GM12878 (cell line): ENCODE measurements at regions of chr10 and their contacts with region 1.

Region 1: GRCh38 chr10:33743429-33743857 is 409.0 kb upstream of the NRP1 start:
- DNase-seq: peak; percentile 19
- ATAC-seq: peak; percentile 81
- H3K4me3 ChIP-seq: no peak overlapping the region
- H3K27ac ChIP-seq: no peak overlapping the region
- H3K4me1 ChIP-seq: no peaks in the 10 kb centered on the region
- H3K27me3 ChIP-seq: no peaks in the 10 kb centered on the region
- CTCF ChIP-seq: no peak
- EP300 ChIP-seq: no peak
- POLR2A ChIP-seq: no peak
- RAD21 ChIP-seq: no peak

Region 2: DNA sequence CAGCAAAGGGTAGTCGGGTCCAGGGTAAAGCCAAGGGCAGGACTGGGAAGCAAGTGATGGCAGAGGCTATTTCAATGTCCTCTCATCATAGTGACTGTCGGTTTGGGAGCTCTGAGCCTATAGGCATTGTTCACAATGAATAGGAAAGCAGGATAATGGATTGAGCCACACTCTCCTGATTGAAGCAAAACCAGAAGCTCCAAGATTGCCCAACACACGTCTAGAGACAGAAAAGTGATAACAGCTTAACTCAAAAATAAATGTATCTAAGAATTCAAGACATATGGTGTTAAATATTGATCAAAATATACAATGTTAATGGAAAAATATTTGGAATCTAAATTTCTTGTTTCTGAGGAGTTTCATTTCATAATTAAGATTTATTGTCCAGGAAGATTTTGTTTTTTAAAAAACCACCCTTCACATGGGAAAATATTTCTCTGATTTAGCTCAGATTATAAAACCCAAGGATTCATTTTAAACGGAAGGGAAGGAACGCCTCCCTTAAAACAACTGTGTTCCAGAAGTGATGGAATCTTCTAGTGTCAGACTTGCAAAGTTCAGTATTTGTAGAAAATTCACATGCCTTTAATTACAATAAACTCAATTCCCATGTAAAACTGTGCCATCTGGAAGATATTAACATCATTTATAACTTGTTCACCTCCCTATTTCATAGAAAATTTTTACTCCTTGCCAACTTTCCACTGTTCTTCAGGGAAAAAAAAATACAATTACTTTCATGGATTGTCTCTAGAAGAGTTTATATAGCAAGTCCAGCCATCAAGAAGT is 463.4 kb before region 1 on chr10:
- CTCF ChIA-PET with region 1: no interaction called
- POLR2A ChIA-PET with region 1: no interaction called
- RAD21 ChIA-PET with region 1: no interaction called
- SMC1A ChIA-PET with region 1: no interaction called
- in situ Hi-C with region 1: no loop called
- intact Hi-C with region 1: no loop called
- DNase-seq: no peak
- ATAC-seq: no peak
- H3K4me3 ChIP-seq: no peak overlapping the region
- H3K27ac ChIP-seq: no peak overlapping the region
- H3K4me1 ChIP-seq: no peaks in the 10 kb centered on the region
- H3K27me3 ChIP-seq: 0 out of 4 replicates have a peak, but pooled peaks cover 0 to 2% of the 10 kb centered on the region in 2 experiments
- CTCF ChIP-seq: no peak
- EP300 ChIP-seq: no peak
- POLR2A ChIP-seq: no peak
- RAD21 ChIP-seq: no peak

Region 3: GRCh38 chr10:33509231-33509831 is 234.1 kb before region 1 on chr10:
- CTCF ChIA-PET with region 1: interaction called, 5 read pairs
- POLR2A ChIA-PET with region 1: no interaction called
- RAD21 ChIA-PET with region 1: interaction called, 4 read pairs
- SMC1A ChIA-PET with region 1: interaction called, 11 read pairs
- in situ Hi-C with region 1: no loop called
- intact Hi-C with region 1: no loop called
- DNase-seq: peak; percentile 25
- ATAC-seq: peak; percentile 87
- H3K4me3 ChIP-seq: no peak overlapping the region
- H3K27ac ChIP-seq: no peak overlapping the region
- H3K4me1 ChIP-seq: no peaks in the 10 kb centered on the region
- H3K27me3 ChIP-seq: no peaks in the 10 kb centered on the region
- CTCF ChIP-seq: no peak
- EP300 ChIP-seq: peak; percentile 70 to 84; a peak in 3 of 4 replicates
- POLR2A ChIP-seq: no peak
- RAD21 ChIP-seq: no peak

Region 4: DNA sequence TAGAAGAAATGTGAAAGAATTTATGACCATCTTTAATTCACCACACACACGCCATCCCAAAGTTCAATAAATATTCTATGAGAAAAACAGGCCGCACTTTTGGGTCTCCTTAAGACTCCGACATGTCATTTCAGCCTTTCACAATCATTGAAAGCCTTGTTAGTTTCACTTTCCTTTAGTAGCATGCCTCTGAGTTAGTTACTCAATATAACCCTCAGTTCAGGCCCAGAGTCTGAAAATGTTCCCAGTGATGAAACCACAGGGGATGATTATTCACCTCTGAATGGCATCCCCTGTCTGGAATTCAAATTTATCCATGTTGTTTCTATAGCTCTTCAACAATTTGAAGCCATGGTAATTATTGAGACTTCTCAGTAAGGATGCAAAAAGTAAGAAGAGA is 130.9 kb before region 1 on chr10:
- CTCF ChIA-PET with region 1: no interaction called
- POLR2A ChIA-PET with region 1: no interaction called
- RAD21 ChIA-PET with region 1: no interaction called
- SMC1A ChIA-PET with region 1: interaction called, 11 read pairs
- in situ Hi-C with region 1: no loop called
- intact Hi-C with region 1: no loop called
- DNase-seq: no peak
- ATAC-seq: peak; percentile 96
- H3K4me3 ChIP-seq: no peak overlapping the region
- H3K27ac ChIP-seq: no peak overlapping the region
- H3K4me1 ChIP-seq: no peaks in the 10 kb centered on the region
- H3K27me3 ChIP-seq: no peaks in the 10 kb centered on the region
- CTCF ChIP-seq: no peak
- EP300 ChIP-seq: peak in 1 of 2 experiments; percentile 25; a peak in 1 of 4 replicates
- POLR2A ChIP-seq: no peak
- RAD21 ChIP-seq: no peak

Region 5: DNA sequence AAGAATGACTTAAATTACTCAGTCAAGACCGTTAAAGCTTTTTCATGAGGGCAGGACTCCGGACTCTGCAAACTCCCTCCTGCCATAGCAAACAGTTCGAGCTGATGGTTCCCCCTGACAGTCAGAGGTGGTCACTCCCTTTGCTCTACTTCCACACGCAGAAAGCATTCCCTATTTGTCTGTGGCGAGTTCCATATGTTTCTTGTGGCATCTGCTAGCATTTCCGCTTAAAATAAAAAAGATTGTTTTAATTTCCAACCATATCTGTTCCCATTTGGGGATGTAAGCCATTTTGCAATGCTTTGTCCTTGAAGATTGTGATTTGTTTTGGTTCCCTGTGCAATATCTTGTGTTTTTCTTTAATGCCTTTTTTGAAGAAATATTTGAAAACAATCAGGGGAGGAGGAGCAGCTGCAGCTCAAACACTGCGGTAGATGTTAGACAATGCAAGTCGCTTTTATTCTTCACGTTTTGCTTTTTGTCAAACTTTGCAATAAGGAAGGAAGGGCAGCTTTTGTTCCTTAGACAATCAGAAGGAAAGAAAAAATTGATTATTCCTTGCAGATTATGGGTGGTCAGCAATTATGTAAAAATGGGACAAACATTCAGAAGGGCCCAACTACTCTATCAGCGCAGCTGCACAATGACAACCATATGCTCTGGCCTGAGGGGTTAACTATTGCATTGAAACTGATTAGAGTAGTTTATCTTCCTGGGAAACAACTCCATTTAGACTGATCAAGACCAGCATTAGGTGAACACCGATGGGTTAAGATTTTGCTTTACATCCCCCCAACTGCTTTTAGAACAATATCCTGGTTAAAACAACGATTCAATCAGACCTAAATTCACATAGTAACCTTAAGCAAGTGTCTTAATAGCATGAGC is 16.9 kb after region 1 on chr10:
- CTCF ChIA-PET with region 1: interaction called, 6 read pairs
- POLR2A ChIA-PET with region 1: interaction called, 4 read pairs
- RAD21 ChIA-PET with region 1: interaction called, 10 read pairs
- SMC1A ChIA-PET with region 1: interaction called, 27 read pairs
- in situ Hi-C with region 1: no loop called
- intact Hi-C with region 1: no loop called
- DNase-seq: no peak
- ATAC-seq: no peak
- H3K4me3 ChIP-seq: no peak overlapping the region
- H3K27ac ChIP-seq: no peak overlapping the region
- H3K4me1 ChIP-seq: no peaks in the 10 kb centered on the region
- H3K27me3 ChIP-seq: no peaks in the 10 kb centered on the region
- CTCF ChIP-seq: no peak
- EP300 ChIP-seq: no peak
- POLR2A ChIP-seq: no peak
- RAD21 ChIP-seq: no peak

Region 6: DNA sequence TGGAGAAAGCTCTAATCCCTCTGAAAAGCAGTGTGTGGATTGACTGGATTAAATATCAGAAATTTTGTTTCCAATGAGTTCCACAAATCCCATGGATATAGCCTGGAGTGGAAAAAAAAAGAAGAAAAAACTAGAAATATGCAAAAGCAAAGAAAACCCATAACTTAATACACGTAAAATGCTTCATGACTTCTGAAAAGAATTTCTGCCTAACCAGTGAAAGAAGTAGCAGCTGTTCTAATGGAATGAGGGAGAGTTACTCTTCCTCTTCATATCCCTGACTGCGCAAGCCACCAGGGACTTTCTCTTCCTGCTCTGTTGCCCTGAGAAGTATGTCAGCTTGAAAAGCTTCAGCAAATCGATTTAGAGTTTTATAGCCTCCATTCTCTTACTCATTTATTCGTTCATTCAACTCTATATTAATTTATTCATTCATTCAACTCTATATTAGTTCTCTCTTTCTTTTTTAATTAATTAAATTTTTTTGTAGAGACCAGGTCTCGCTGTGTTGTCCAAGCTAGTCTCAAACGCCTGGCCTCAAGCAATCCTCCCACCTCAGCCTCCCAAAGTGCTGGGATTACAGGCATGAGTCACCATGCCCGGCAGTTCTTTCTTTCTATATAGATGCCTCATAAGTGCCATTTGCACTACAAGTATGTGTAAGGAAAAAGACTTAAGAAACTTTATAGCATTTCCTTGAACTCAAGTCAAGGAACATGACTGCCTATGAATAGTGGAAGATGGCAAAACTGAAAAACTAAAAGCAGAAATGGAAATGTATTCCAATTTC is 38.4 kb after region 1 on chr10:
- CTCF ChIA-PET with region 1: interaction called, 3 read pairs
- POLR2A ChIA-PET with region 1: interaction called, 4 read pairs
- RAD21 ChIA-PET with region 1: interaction called, 69 read pairs
- SMC1A ChIA-PET with region 1: interaction called, 84 read pairs
- in situ Hi-C with region 1: no loop called
- intact Hi-C with region 1: no loop called
- DNase-seq: no peak
- ATAC-seq: no peak
- H3K4me3 ChIP-seq: no peak overlapping the region
- H3K27ac ChIP-seq: no peak overlapping the region
- H3K4me1 ChIP-seq: no peaks in the 10 kb centered on the region
- H3K27me3 ChIP-seq: no peaks in the 10 kb centered on the region
- CTCF ChIP-seq: no peak
- EP300 ChIP-seq: no peak
- POLR2A ChIP-seq: no peak
- RAD21 ChIP-seq: no peak

Region 7: GRCh38 chr10:33986515-33986914 is 243.1 kb after region 1 on chr10:
- CTCF ChIA-PET with region 1: no interaction called
- POLR2A ChIA-PET with region 1: no interaction called
- RAD21 ChIA-PET with region 1: no interaction called
- SMC1A ChIA-PET with region 1: no interaction called
- in situ Hi-C with region 1: no loop called
- intact Hi-C with region 1: no loop called
- DNase-seq: no peak
- ATAC-seq: no peak
- H3K4me3 ChIP-seq: no peak overlapping the region
- H3K27ac ChIP-seq: no peak overlapping the region
- H3K4me1 ChIP-seq: no peaks in the 10 kb centered on the region
- H3K27me3 ChIP-seq: no peaks in the 10 kb centered on the region
- CTCF ChIP-seq: no peak
- EP300 ChIP-seq: no peak
- POLR2A ChIP-seq: no peak
- RAD21 ChIP-seq: no peak

Region 8: DNA sequence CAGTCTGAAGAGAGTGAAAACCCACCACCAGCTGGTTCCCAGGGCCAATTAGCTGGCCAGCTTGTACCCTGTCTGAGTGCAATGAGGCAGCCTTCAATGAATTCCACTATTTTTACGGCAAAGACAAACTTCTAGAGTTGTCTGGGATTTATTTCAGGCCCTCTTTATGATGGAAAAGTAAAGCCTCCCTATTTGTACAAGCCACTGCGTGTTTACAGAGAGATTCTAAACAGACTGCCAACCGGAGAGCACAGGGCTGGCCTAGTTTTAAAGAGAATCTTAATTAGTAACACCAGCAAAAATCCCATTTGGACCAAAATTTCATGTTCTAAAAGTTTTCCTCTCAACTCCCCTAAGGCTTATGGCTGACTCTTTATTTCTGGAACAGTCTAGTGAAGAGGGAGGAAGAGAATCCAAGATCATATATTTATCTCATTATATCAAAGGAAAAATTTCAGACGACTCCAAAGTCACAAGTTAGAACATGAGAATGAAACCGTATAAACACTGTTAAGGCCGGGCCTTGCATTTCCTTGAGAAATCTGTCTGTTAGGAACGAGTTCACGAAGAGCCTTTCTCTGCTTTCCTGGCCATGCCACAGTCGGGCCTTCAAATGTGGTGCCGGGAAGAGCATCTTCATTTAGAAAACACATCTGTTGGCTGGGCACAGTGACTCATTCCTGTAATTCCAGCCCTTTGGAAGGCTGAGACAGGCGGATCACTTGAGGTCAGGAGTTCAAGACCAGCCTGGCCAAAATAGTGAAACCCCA is 315.6 kb after region 1 on chr10:
- CTCF ChIA-PET with region 1: no interaction called
- POLR2A ChIA-PET with region 1: no interaction called
- RAD21 ChIA-PET with region 1: no interaction called
- SMC1A ChIA-PET with region 1: no interaction called
- in situ Hi-C with region 1: no loop called
- intact Hi-C with region 1: no loop called
- DNase-seq: no peak
- ATAC-seq: no peak
- H3K4me3 ChIP-seq: no peak overlapping the region
- H3K27ac ChIP-seq: no peak overlapping the region
- H3K4me1 ChIP-seq: no peaks in the 10 kb centered on the region
- H3K27me3 ChIP-seq: no peaks in the 10 kb centered on the region
- CTCF ChIP-seq: no peak
- EP300 ChIP-seq: no peak
- POLR2A ChIP-seq: no peak
- RAD21 ChIP-seq: no peak